ENCODE measurements at regions of chr12 and their contacts with region 1.

Region 1: DNA sequence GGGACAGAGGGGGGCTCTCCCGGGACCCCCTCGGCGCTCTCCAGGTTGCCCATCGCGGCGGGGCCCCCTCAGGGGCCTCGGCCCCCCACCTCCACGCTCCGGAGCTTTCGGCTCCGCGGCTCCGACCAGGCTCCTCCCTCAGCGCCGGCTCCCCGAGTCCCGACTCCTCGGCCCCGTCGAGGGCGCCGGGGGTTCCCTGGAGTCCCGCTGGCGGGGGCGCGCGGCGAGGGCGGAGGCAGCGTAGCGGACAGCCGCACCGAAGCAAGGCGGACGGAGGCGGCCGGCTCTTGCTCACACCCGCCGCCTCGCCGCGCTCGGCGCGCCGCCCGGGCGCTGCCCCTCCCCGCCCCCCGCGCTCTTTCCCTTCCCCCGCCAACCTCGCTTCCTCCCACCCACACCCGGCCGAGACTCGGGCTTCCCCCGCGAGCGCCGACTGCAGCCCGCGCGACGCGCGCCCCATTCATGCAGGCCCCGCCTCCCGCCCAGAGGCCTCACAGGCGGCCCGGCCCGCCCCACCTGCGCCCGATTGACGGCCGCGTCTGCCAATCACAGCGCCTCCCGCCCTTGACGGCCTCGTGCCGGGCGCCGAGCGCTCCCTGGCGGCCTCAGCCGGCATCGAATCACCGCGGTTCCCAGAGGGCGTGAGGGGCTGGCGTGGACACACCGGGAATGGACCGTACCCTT is at the start of gene FMNL3:
- DNase-seq: peak; percentile 98
- H3K4me3 Mint-ChIP-seq: peak within 1 kb of the TSS; percentile 88
- H3K27ac Mint-ChIP-seq: peak within 1 kb of the TSS; percentile 65
- H3K4me1 Mint-ChIP-seq: peaks cover 41% of the 10 kb centered on the region
- H3K27me3 Mint-ChIP-seq: peaks cover 26% of the 10 kb centered on the region
- total RNA-seq, gene FMNL3: 34.7 to 34.9 TPM

Region 2: DNA sequence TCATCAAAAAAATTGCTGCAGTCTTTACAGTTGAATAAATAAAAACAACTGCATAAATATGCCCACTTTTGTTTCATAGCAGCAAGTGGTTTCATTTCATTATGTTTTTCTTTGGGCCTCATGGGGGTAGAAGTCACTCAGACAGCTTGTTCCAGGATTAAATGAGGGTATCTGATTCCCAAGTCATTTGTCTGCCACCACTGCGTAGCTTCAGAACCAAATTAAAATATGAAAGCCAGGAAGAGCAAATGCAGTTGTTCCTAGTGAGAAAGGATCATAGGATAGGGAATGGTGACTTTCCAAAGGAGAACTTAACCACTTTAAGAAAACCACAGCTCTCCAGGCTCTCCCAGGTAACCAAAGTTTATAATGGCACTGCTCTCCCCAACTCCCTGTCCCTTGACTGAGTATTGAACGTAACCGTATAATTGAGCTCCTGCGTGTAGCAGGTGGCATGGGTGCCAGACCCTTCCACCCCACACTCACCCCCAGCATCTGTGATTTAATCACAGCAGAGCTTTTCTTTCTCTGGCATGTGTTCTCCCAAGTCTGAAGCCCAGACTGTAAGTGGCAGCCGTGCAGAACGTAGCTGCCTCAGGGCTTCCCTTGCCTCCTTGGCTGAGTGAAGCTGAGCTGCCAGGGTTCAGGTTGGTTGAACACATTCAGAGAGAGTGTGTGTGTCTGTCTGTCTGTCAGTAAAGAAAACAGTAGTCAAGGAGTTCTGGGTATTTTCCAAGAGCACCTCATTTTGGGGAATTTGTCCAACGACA is 179.7 kb before region 1 on chr12:
- CTCF ChIA-PET with region 1: no interaction called
- POLR2A ChIA-PET with region 1: no interaction called
- DNase-seq: no peak
- H3K4me3 Mint-ChIP-seq: no peak overlapping the region
- H3K27ac Mint-ChIP-seq: no peak overlapping the region
- H3K4me1 Mint-ChIP-seq: no peaks in the 10 kb centered on the region
- H3K27me3 Mint-ChIP-seq: no peaks in the 10 kb centered on the region

Region 3: DNA sequence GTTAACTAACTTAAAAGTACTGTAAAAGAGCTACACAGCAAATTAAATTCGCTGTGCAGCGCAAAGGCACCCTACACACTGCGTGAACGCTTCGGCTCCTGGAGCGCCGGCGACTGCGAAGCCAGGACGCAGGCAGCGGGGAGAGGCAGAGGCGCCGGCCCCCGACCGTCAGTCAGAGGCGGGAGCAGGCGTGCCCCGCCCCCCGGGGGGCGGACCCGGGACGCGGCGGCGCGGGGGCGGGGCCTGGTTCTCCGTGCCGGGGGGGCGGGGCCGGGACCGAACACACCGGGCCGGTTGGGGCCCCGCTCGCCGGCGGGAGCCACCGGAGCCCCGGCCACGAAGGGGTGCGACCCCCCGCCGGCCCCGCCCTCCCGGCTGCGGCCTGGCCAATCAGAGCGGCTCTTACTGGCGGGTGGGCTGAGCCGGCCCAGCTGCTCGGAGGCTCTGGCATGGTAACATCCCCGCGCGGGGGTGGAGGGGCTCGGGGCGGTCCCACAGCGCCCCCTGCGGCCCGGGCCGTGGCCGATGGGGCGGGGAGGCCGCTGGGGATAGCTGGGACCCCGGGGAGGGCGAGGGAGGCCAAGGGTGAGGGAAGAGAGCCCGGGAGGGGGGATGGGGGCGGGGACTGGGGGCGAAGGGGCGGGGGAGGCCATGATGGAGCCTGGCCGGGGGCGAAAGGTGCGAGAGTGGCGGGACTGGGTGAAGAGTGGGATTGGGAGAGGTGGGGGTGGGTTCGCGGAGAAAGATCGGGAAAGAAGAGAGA is 83.9 kb before region 1 on chr12 and contains the start of gene PRPF40B:
- CTCF ChIA-PET with region 1: interaction called, 9 read pairs
- POLR2A ChIA-PET with region 1: interaction called, 12 read pairs
- DNase-seq: peak; percentile 86
- H3K4me3 Mint-ChIP-seq: peak within 1 kb of the TSS; percentile 77
- H3K27ac Mint-ChIP-seq: peak within 1 kb of the TSS; percentile 81
- H3K4me1 Mint-ChIP-seq: peaks cover 27% of the 10 kb centered on the region
- H3K27me3 Mint-ChIP-seq: peaks cover 34% of the 10 kb centered on the region
- total RNA-seq, gene PRPF40B: 8.0 to 8.7 TPM

Region 4: DNA sequence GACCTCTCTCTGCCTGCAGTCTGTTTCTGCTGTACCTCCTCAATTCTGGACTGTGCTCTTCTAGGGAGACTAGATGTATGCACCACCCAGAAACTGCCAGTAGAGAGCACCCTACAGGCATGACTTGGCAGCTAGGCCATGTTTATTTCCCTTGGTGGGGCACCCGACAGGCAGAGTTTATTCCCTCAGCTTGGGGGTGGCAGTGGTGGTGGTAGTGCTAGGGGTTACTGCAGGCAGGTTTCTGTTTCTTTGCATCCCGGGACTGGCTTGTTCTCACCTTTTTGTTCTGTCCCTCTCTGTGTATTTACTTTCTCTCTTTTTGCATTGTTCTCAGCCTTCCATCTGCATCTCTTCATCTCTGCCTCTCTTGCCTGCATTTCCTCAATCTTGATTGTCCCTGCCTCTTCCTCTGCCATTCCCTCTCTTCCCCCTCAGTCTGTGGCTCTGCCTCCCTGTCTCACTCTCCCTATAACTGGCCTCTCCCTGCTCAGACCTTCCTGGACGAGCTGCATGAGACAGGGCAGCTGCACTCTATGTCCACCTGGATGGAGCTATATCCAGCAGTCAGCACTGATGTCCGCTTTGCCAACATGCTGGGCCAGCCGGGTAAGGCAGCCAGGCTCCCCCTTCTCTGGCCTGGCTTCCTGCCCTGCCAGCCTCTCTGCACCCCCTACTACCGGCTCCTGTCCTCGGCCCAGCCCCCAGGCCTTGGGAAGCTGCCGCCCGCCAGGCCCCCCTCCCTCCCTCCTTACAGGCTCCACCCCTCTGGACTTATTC is 70.1 kb before region 1 on chr12:
- CTCF ChIA-PET with region 1: interaction called, 372 read pairs
- POLR2A ChIA-PET with region 1: interaction called, 38 read pairs
- DNase-seq: peak; percentile 68
- H3K4me3 Mint-ChIP-seq: no peak overlapping the region
- H3K27ac Mint-ChIP-seq: no peak overlapping the region
- H3K4me1 Mint-ChIP-seq: peaks cover 16% of the 10 kb centered on the region
- H3K27me3 Mint-ChIP-seq: no peaks in the 10 kb centered on the region

Region 5: DNA sequence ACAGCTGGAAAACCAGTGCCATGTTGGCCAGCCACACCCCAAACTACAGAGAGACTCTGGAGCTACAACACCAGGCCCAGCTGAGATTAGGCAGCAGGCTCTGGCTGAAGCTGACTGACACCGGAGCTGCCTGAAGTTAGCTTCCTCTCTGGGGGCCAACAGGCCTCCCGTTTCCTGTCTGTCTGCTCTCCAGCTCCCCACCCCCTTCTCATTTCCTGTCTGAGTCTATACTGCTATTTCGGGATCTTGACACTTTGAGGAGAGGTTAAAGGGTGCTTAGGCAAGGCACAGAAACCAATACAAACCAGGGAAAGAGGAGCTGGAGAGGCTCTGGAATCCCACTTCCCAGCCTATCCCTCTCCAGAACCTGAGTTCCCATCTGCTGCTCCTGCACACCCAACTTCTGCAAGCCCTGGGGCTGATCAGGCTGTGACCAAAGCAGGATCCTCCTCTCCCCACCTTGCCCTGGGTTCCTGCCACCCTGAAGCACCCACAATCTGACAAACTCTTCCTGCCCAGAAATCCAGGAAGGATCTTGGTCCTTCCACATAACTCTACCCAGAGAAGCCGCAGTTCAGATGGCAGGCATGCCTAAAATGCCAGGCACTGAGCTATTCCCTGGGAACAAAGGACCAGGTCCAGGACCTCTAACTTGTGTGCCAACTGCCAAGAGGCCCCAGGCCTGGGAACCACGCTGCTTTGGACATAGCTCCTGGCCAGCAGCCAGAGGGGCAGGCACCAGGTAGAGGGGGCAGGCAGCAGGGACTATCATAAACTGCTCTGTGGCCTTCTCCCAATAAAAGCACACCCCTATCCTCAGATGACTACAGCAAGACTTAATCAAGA is 44.0 kb before region 1 on chr12:
- CTCF ChIA-PET with region 1: interaction called, 15 read pairs
- POLR2A ChIA-PET with region 1: interaction called, 50 read pairs
- DNase-seq: peak; percentile 82
- H3K4me3 Mint-ChIP-seq: peak overlapping the region; percentile 56
- H3K27ac Mint-ChIP-seq: peak overlapping the region; percentile 95
- H3K4me1 Mint-ChIP-seq: peaks cover 60% of the 10 kb centered on the region
- H3K27me3 Mint-ChIP-seq: no peaks in the 10 kb centered on the region

Region 6: DNA sequence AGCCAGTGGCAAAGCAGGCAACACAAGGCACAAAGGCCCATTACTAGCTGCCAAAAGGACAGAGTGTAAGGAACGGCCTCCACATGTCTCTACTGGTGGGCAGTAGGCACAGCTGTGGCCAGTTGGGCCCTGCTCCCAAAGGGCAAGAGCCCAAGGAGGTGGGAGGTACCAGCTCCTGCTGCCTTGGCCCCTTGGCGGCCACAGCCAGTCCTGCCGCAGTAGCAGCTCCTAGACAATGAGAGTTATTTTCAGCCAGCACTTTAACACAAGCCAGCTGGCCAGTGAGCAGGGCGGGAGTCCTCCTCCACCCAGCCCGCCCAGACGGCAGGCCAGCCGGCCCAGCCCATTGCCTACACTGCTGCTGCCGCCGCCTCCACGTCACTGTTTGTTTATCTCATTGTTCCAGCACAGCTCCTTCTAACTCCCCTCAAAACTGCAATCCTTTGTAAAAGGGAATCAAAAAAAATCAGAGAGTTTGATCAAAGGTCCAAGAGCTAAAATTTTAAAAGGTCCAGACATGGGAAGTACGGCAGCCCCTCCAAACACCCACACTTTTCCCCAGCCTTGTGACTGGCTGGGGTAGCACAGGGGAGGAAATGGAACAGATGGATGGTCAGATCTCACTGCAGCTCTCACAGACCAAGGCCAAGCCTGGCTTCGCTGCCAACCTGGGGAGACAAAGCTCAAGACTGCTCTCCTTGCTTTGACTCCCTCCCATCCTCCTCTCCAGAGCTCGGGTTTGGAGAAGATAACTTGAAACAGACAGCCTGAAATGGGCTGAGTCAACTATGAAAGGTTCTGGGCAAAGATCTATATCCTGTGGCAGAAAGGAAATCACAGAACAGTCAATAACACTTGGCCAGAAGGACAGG is 33.6 kb before region 1 on chr12:
- CTCF ChIA-PET with region 1: interaction called, 10 read pairs
- POLR2A ChIA-PET with region 1: interaction called, 72 read pairs
- DNase-seq: no peak
- H3K4me3 Mint-ChIP-seq: no peak overlapping the region
- H3K27ac Mint-ChIP-seq: peak overlapping the region; percentile 68
- H3K4me1 Mint-ChIP-seq: peaks cover 71% of the 10 kb centered on the region
- H3K27me3 Mint-ChIP-seq: no peaks in the 10 kb centered on the region

Region 7: DNA sequence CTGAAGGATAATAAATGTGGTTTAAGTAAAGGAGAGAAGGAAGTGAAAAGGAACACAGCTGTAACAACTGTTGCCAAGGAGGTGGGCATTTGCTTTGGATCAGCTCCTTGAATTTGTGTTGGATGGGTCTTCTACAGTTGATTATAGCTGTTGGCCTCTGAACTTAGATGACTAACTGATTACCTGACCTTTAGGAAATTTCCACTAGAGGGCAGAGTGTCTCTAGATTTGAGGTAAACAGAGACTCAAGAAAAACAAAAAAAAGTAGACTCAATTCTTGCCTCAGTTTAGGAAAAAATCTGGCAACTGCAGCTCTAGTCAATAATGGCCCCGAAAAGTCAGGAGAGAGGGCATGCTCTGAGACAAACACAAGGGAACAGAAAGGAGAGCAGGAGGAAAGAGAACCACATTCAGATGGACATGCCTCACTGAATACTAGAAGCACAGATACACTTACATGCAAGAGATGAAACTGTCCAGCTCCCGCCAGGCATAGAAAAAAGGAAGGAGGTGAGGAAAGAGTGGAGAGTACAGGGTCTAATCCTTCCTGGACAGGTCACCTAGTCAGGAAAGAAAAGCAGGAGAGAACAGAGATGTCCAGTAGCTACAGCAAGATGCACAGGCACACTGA is 425.4 kb after region 1 on chr12:
- CTCF ChIA-PET with region 1: no interaction called
- POLR2A ChIA-PET with region 1: no interaction called
- DNase-seq: no peak
- H3K4me3 Mint-ChIP-seq: no peak overlapping the region
- H3K27ac Mint-ChIP-seq: peak overlapping the region; percentile 30
- H3K4me1 Mint-ChIP-seq: peaks cover 7% of the 10 kb centered on the region
- H3K27me3 Mint-ChIP-seq: no peaks in the 10 kb centered on the region

Measured in activated CD4-positive, alpha-beta memory T cell treated with anti-CD3 and anti-CD28 coated beads, Interleukin-2, amount 10 ng/mL, durations not matched to agents 7 days and 5 days (primary cell).